ENCODE measurements at regions of chr2 and their contacts with region 1.

Region 1: GRCh38 chr2:1140389-1141003 is 189.8 kb downstream of the SNTG2 start:
- DNase-seq: peak; percentile 90
- H3K4me3 ChIP-seq: no peak overlapping the region
- H3K27ac ChIP-seq: no peak overlapping the region
- H3K4me1 ChIP-seq: no peaks in the 10 kb centered on the region; a peak in 1 of 4 replicates
- H3K27me3 ChIP-seq: no peaks in the 10 kb centered on the region
- CTCF ChIP-seq: peak; percentile 58
- EP300 ChIP-seq: no peak
- RAD21 ChIP-seq: peak; percentile 65

Region 2: GRCh38 chr2:903229-903900 is 237.1 kb before region 1 on chr2:
- CTCF ChIA-PET with region 1: no interaction called
- POLR2A ChIA-PET with region 1: no interaction called
- DNase-seq: no peak
- H3K4me3 ChIP-seq: no peak overlapping the region
- H3K27ac ChIP-seq: no peak overlapping the region
- H3K4me1 ChIP-seq: no peaks in the 10 kb centered on the region; a peak in 1 of 4 replicates
- H3K27me3 ChIP-seq: no peaks in the 10 kb centered on the region
- CTCF ChIP-seq: no peak
- EP300 ChIP-seq: no peak
- RAD21 ChIP-seq: peak; percentile 67

Region 3: DNA sequence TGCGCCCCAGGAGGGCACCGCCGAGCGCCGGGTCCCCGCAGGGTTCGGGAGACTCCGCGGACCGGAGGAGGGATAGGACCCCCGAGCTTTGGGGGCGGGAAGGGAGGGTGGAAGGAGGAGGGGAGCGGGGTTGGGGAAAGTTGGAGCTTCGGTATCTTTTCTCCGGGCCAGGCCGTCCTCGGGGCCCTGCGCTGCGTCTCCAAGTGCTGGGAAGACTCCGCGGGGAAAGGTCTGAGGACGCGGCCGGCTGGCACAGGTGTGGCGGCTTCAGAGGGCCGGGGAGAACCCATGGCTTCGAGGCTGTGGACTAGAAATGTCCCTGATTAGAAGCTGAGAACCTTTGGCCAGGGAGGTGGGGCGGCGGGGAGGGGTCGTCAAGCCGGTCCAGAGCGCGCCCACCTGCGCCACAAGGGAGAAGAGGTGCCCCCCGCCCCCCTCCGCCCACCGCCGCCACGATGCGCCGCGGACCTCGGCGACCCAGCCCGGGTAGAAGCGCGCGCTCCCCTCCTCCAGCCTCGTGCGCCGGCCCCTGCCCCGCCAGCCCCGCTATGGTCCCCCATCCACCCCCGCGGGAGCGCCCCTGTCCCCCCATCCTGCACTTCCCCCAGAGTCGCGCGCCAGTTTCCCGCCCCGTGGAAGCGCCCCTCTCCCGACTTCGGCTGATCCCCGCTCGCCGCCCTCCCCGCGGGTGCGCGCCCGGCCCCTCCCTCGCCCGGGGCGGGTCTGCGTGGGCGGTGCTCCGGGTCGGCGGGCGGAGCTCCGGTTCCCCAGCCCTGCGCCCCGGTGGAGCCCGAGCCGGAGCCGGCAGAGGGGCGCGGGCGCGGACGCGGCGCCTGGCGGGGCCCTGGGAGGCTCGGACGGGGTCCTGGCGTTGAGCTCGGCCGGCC is 190.2 kb before region 1 on chr2 and contains the start of gene SNTG2:
- CTCF ChIA-PET with region 1: interaction called, 32 read pairs
- POLR2A ChIA-PET with region 1: no interaction called
- DNase-seq: peak; percentile 97
- H3K4me3 ChIP-seq: peak within 1 kb of the TSS in 1 of 2 experiments; percentile 49; a peak in 2 of 4 replicates
- H3K27ac ChIP-seq: no peak within 1 kb of the TSS
- H3K4me1 ChIP-seq: peaks cover 0 to 6% of the 10 kb centered on the region in 2 experiments; a peak in 1 of 4 replicates
- H3K27me3 ChIP-seq: no peaks in the 10 kb centered on the region
- CTCF ChIP-seq: no peak
- EP300 ChIP-seq: no peak
- RAD21 ChIP-seq: no peak
- polyA plus RNA-seq, gene SNTG2: not detected in 2 replicates

Region 4: GRCh38 chr2:1070616-1071015 is 69.9 kb before region 1 on chr2:
- CTCF ChIA-PET with region 1: interaction called, 15 read pairs
- POLR2A ChIA-PET with region 1: no interaction called
- DNase-seq: peak; percentile 76
- H3K4me3 ChIP-seq: no peak overlapping the region; a peak in 1 of 4 replicates
- H3K27ac ChIP-seq: no peak overlapping the region
- H3K4me1 ChIP-seq: peaks cover 0 to 8% of the 10 kb centered on the region in 2 experiments; a peak in 2 of 4 replicates
- H3K27me3 ChIP-seq: no peaks in the 10 kb centered on the region
- CTCF ChIP-seq: no peak
- EP300 ChIP-seq: peak in 1 of 2 experiments; percentile 37; a peak in 1 of 4 replicates
- RAD21 ChIP-seq: peak; percentile 63

Region 5: GRCh38 chr2:1125633-1126370 is 14.7 kb before region 1 on chr2:
- CTCF ChIA-PET with region 1: interaction called, 46 read pairs
- POLR2A ChIA-PET with region 1: no interaction called
- DNase-seq: no peak
- H3K4me3 ChIP-seq: no peak overlapping the region
- H3K27ac ChIP-seq: no peak overlapping the region
- H3K4me1 ChIP-seq: peaks cover 0 to under 1% of the 10 kb centered on the region in 2 experiments; a peak in 1 of 4 replicates
- H3K27me3 ChIP-seq: no peaks in the 10 kb centered on the region
- CTCF ChIP-seq: no peak
- EP300 ChIP-seq: no peak
- RAD21 ChIP-seq: no peak

Region 6: DNA sequence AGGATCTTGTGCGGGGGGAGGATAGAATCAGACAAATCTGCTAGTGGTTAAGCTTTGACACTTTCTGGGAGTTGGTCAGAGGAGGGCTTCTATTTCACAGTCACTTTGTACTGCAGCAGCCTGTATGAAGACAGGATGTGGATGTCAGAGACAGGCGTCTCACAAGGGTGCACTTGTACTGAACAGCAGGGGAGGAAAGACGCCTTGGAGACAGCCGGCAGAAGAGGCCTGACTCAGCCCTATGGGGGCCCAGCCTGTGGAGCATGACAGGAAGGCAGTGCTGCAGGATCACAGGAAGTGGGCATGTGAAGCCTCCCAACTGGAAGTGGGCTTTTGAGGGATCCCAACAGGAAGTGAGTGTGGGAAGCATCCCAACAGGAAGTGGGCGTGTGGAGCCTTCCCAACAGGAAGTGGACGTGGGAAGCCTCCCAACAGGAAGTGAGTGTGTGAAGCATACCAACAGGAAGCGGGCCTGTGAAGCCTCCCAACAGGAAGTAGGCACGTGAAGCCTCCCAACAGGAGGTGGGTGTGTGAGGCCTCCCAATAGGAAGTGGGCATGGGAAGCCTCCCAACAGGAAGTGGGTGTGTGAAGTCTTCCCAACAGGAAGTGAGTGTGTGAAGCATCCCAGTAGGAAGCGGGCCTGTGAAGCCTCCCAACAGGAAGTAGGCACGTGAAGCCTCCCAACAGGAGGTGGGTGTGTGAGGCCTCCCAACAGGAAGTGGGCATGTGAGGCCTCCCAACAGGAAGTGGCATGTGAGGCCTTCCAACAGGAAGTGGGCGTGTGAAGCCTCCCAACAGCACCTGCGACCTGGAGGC is 22.5 kb after region 1 on chr2:
- CTCF ChIA-PET with region 1: interaction called, 15 read pairs
- POLR2A ChIA-PET with region 1: no interaction called
- DNase-seq: no peak
- H3K4me3 ChIP-seq: no peak overlapping the region
- H3K27ac ChIP-seq: no peak overlapping the region
- H3K4me1 ChIP-seq: no peaks in the 10 kb centered on the region
- H3K27me3 ChIP-seq: no peaks in the 10 kb centered on the region
- CTCF ChIP-seq: no peak
- EP300 ChIP-seq: no peak
- RAD21 ChIP-seq: no peak